ENCODE measurements at regions of chr3 and their contacts with region 1.

Region 1: DNA sequence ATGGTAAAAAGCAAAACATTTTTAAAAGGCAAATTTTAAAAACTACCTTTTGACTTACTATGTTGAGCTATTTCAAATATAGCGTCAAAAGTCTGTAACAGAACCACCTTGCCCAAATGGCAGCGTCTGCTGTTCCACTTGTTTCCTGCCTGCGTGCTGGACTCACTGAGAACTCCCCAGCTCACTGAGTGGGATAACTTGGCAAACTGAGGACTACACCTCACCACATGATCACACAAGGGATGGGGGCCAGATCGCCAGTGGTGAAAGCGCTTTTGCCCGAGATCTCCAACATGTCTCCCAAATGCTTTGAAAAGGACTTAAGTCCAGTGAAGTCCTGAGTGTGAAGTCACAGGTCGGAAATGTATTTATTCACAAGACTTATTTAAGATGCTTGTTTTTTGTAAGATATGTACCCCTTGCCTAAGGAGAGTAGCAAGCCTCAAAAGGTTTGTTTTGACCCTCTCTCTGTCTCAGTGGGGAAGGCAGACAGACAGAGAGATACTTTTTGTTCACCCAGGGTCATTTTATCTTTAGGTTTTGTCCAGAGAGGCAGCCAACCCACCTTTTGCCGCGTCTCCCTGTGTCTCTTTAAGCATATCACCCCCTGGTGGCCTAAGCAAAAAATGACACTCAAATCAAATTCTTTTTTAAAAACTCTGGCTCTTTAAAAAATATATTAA is 192.6 kb downstream of the PDZRN3 start:
- DNase-seq: no peak
- H3K4me3 Mint-ChIP-seq: no peak overlapping the region
- H3K27ac Mint-ChIP-seq: no peak overlapping the region
- H3K4me1 Mint-ChIP-seq: no peaks in the 10 kb centered on the region
- H3K27me3 Mint-ChIP-seq: peaks cover 2% of the 10 kb centered on the region

Region 2: GRCh38 chr3:73100741-73101559 is 331.2 kb before region 1 on chr3:
- intact Hi-C with region 1: loop called (anchors 1 kb)
- DNase-seq: peak; percentile 57
- H3K4me3 Mint-ChIP-seq: no peak overlapping the region
- H3K27ac Mint-ChIP-seq: no peak overlapping the region
- H3K4me1 Mint-ChIP-seq: no peaks in the 10 kb centered on the region
- H3K27me3 Mint-ChIP-seq: peaks cover 2% of the 10 kb centered on the region

Measured in activated T-helper 1 cell treated with anti-CD3 and anti-CD28 coated beads, Interleukin-12 subunit alpha, Interleukin-12 subunit beta, Interleukin-2, Interleukin-4 antibody, amounts not matched to agents 30 ng/mL and 10 ng/mL and 1 ng/mL, durations not matched to agents 14 hours and 24 hours and 36 hours (primary cell).